ENCODE measurements at regions of chr12 and their contacts with region 1.

Region 1: GRCh38 chr12:56636675-56637540 is 6.8 kb upstream of the BAZ2A start:
- DNase-seq: peak; percentile 98
- ATAC-seq: peak; percentile 73
- H3K4me3 Mint-ChIP-seq: peak overlapping the region; percentile 87
- H3K27ac Mint-ChIP-seq: peak overlapping the region; percentile 92
- H3K4me1 Mint-ChIP-seq: peaks cover 60% of the 10 kb centered on the region
- H3K27me3 Mint-ChIP-seq: no peaks in the 10 kb centered on the region

Region 2: GRCh38 chr12:56622535-56622934 is 14.4 kb before region 1 on chr12:
- CTCF ChIA-PET with region 1: interaction called, 22 read pairs
- POLR2A ChIA-PET with region 1: no interaction called
- intact Hi-C with region 1: no loop called
- DNase-seq: no peak
- ATAC-seq: peak; percentile 84
- H3K4me3 Mint-ChIP-seq: no peak overlapping the region
- H3K27ac Mint-ChIP-seq: peak overlapping the region; percentile 7
- H3K4me1 Mint-ChIP-seq: peaks cover 55% of the 10 kb centered on the region
- H3K27me3 Mint-ChIP-seq: no peaks in the 10 kb centered on the region

Region 3: GRCh38 chr12:56900583-56900982 is 263.7 kb after region 1 on chr12:
- CTCF ChIA-PET with region 1: no interaction called
- POLR2A ChIA-PET with region 1: no interaction called
- intact Hi-C with region 1: no loop called
- DNase-seq: peak; percentile 15
- ATAC-seq: no peak
- H3K4me3 Mint-ChIP-seq: no peak overlapping the region
- H3K27ac Mint-ChIP-seq: no peak overlapping the region
- H3K4me1 Mint-ChIP-seq: no peaks in the 10 kb centered on the region
- H3K27me3 Mint-ChIP-seq: peaks cover 9% of the 10 kb centered on the region

Region 4: GRCh38 chr12:57078519-57079404 is 441.9 kb after region 1 on chr12 and contains the start of gene NEMP1:
- CTCF ChIA-PET with region 1: interaction called, 4 read pairs
- POLR2A ChIA-PET with region 1: no interaction called
- intact Hi-C with region 1: loop called in 1 of 2 experiments (anchors 2 kb)
- DNase-seq: peak; percentile 97
- ATAC-seq: peak; percentile 95
- H3K4me3 Mint-ChIP-seq: peak within 1 kb of the TSS; percentile 97
- H3K27ac Mint-ChIP-seq: peak within 1 kb of the TSS; percentile 94
- H3K4me1 Mint-ChIP-seq: peaks cover 29% of the 10 kb centered on the region
- H3K27me3 Mint-ChIP-seq: no peaks in the 10 kb centered on the region
- total RNA-seq, gene NEMP1: 79.0 to 81.1 TPM

Region 5: DNA sequence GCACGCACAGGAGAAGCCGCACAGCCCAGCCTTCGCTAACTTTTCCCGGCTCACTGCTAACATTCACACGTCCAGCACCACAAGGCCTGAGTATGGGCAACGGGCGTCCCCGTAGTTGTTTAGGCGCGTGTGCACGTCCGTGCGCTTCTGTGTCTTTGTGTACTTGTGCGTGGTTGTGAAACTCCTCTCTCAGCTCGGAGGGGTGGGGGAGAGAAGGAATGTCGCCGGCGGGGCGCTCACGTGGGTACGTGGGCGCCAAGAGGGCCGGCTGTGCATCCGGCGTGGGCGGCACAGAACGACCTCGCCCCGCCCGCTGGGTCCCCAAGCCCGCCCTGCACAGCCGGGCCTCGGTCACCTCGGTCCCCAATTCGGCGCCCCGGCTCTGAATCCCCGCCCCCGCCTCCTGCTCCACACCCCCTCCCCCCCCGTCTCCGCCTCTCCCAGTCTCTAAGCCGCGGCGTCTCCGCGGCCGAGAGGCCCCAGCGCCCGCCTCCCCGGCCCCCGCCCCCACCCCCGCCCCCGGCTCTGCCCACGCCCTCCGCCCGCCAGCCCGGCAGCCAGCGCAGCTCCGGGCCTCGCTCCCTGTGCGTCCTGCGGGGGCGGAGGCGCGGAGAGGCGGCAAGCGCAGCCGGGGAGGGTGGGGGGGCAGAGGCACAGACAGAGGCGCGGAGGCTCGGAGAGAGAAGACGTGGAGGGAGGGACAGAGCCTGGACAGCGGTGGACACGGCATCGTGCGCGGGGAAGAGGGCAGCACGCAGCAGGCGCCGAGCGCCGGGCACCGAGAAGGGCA is 451.7 kb after region 1 on chr12 and contains the start of gene NAB2:
- CTCF ChIA-PET with region 1: no interaction called
- POLR2A ChIA-PET with region 1: no interaction called
- intact Hi-C with region 1: loop called in 1 of 2 experiments (anchors 1 kb)
- DNase-seq: peak; percentile 95
- ATAC-seq: peak; percentile 49
- H3K4me3 Mint-ChIP-seq: peak within 1 kb of the TSS; percentile 93
- H3K27ac Mint-ChIP-seq: peak within 1 kb of the TSS; percentile 95
- H3K4me1 Mint-ChIP-seq: peaks cover 63% of the 10 kb centered on the region
- H3K27me3 Mint-ChIP-seq: no peaks in the 10 kb centered on the region
- total RNA-seq, gene NAB2: 46.8 to 48.6 TPM

Region 6: GRCh38 chr12:57229634-57230380 is 592.9 kb after region 1 on chr12 and contains the start of gene SHMT2:
- CTCF ChIA-PET with region 1: no interaction called
- POLR2A ChIA-PET with region 1: no interaction called
- intact Hi-C with region 1: loop called in 1 of 2 experiments (anchors 10 kb)
- DNase-seq: peak; percentile 97
- ATAC-seq: peak; percentile 73
- H3K4me3 Mint-ChIP-seq: peak within 1 kb of the TSS; percentile 100
- H3K27ac Mint-ChIP-seq: peak within 1 kb of the TSS; percentile 99
- H3K4me1 Mint-ChIP-seq: peaks cover 65% of the 10 kb centered on the region
- H3K27me3 Mint-ChIP-seq: peaks cover 19% of the 10 kb centered on the region
- total RNA-seq, gene SHMT2: 436 to 487 TPM

Region 7: GRCh38 chr12:57496822-57497221 is 859.9 kb after region 1 on chr12:
- CTCF ChIA-PET with region 1: no interaction called
- POLR2A ChIA-PET with region 1: no interaction called
- intact Hi-C with region 1: no loop called
- DNase-seq: no peak
- ATAC-seq: peak; percentile 69
- H3K4me3 Mint-ChIP-seq: no peak overlapping the region
- H3K27ac Mint-ChIP-seq: peak overlapping the region; percentile 38
- H3K4me1 Mint-ChIP-seq: peaks cover 11% of the 10 kb centered on the region
- H3K27me3 Mint-ChIP-seq: no peaks in the 10 kb centered on the region